Activated CD4-positive, alpha-beta T cell treated with anti-CD3 and anti-CD28 coated beads, Interleukin-2, amount 10 ng/mL, durations not matched to agents 7 days and 5 days (primary cell): ENCODE measurements at regions of chr16 and their contacts with region 1.

Region 1: GRCh38 chr16:27436921-27437650 is 35.1 kb downstream of the IL21R start:
- DNase-seq: no peak
- H3K4me3 Mint-ChIP-seq: no peak overlapping the region
- H3K27ac Mint-ChIP-seq: no peak overlapping the region
- H3K4me1 Mint-ChIP-seq: peaks cover 16% of the 10 kb centered on the region
- H3K27me3 Mint-ChIP-seq: no peaks in the 10 kb centered on the region

Region 2: GRCh38 chr16:27449434-27450195 is 12.5 kb after region 1 on chr16:
- CTCF ChIA-PET with region 1: interaction called, 11 read pairs
- POLR2A ChIA-PET with region 1: no interaction called
- DNase-seq: peak; percentile 21
- H3K4me3 Mint-ChIP-seq: no peak overlapping the region
- H3K27ac Mint-ChIP-seq: peak overlapping the region; percentile 66
- H3K4me1 Mint-ChIP-seq: peaks cover 71% of the 10 kb centered on the region
- H3K27me3 Mint-ChIP-seq: no peaks in the 10 kb centered on the region

Region 3: GRCh38 chr16:27461483-27462171 is 24.5 kb after region 1 on chr16:
- CTCF ChIA-PET with region 1: no interaction called
- POLR2A ChIA-PET with region 1: no interaction called
- DNase-seq: no peak
- H3K4me3 Mint-ChIP-seq: no peak overlapping the region
- H3K27ac Mint-ChIP-seq: peak overlapping the region; percentile 64
- H3K4me1 Mint-ChIP-seq: peaks cover 47% of the 10 kb centered on the region
- H3K27me3 Mint-ChIP-seq: no peaks in the 10 kb centered on the region

Region 4: GRCh38 chr16:28264656-28265055 is 827.6 kb after region 1 on chr16:
- CTCF ChIA-PET with region 1: no interaction called
- POLR2A ChIA-PET with region 1: no interaction called
- DNase-seq: no peak
- H3K4me3 Mint-ChIP-seq: no peak overlapping the region
- H3K27ac Mint-ChIP-seq: peak overlapping the region; percentile 44
- H3K4me1 Mint-ChIP-seq: peaks cover 16% of the 10 kb centered on the region
- H3K27me3 Mint-ChIP-seq: peaks cover 24% of the 10 kb centered on the region